Mammary epithelial cell (primary cell): ENCODE measurements at regions of chr13 and their contacts with region 1.

Region 1: GRCh38 chr13:103883164-103883563 is 816.9 kb upstream of the SLC10A2 start:
- DNase-seq: peak; percentile 89
- H3K4me3 ChIP-seq: no peak overlapping the region
- H3K27ac ChIP-seq: no peak overlapping the region
- H3K4me1 ChIP-seq: peaks cover 2% of the 10 kb centered on the region
- H3K27me3 ChIP-seq: no peaks in the 10 kb centered on the region
- CTCF ChIP-seq: peak; percentile 46 to 67

Region 2: DNA sequence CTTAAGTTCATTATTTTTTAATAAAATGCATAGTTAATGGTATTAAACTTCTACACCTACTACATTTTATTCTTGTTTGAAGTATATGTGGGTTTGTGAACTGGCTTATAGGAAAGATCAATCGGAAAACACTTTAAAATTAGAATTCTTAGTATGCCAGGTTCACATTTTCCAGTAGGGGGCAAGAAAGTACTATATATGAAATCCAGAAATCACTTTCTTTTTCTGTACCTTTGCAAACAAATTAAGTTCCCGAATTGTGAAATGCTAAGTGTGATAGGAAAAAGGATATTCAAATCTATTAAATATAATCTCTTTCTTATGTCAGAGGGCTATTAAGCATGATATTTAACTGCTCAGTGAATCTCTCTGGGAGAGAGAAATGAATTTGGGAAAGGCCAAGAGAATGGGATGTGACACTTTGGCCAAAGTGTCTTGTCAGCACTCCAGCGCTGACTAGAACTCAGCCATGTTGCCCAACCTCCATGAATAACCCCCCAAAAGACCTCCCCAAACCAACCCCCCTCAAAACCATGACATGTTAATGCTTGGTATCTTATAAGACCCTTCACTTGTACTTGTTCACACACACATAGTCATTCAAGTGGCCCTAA is 694.3 kb before region 1 on chr13:
- CTCF ChIA-PET with region 1: no interaction called
- dilution Hi-C with region 1: no loop called
- in situ Hi-C with region 1: no loop called
- intact Hi-C with region 1: loop called (anchors 5 kb)
- DNase-seq: peak; percentile 23
- H3K4me3 ChIP-seq: no peak overlapping the region
- H3K27ac ChIP-seq: no peak overlapping the region
- H3K4me1 ChIP-seq: no peaks in the 10 kb centered on the region
- H3K27me3 ChIP-seq: no peaks in the 10 kb centered on the region
- CTCF ChIP-seq: peak; percentile 58 to 68

Region 3: DNA sequence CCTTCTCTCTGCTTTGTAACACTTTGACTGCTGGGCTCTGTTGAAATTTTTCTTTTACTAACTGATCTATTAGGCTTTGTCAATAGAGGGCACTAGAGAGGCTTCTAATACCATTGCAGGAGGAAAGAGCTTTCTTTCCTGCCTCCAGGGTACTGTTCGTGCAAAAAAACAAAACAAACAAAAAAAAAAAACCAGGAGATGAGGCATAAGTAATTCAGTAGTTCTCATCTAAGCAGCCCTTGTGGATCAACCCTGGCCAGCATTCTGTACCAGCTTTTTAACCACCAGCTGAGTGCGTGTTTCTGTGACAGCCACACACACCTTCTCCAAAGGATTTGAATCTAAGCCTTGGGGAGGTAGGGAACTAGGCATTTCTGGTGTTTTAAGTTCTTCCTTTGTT is 890.6 kb after region 1 on chr13:
- CTCF ChIA-PET with region 1: no interaction called
- dilution Hi-C with region 1: no loop called
- in situ Hi-C with region 1: no loop called
- intact Hi-C with region 1: loop called (anchors 1 kb)
- DNase-seq: peak; percentile 32
- H3K4me3 ChIP-seq: no peak overlapping the region
- H3K27ac ChIP-seq: no peak overlapping the region
- H3K4me1 ChIP-seq: no peaks in the 10 kb centered on the region
- H3K27me3 ChIP-seq: no peaks in the 10 kb centered on the region
- CTCF ChIP-seq: peak; percentile 45 to 69

Region 4: DNA sequence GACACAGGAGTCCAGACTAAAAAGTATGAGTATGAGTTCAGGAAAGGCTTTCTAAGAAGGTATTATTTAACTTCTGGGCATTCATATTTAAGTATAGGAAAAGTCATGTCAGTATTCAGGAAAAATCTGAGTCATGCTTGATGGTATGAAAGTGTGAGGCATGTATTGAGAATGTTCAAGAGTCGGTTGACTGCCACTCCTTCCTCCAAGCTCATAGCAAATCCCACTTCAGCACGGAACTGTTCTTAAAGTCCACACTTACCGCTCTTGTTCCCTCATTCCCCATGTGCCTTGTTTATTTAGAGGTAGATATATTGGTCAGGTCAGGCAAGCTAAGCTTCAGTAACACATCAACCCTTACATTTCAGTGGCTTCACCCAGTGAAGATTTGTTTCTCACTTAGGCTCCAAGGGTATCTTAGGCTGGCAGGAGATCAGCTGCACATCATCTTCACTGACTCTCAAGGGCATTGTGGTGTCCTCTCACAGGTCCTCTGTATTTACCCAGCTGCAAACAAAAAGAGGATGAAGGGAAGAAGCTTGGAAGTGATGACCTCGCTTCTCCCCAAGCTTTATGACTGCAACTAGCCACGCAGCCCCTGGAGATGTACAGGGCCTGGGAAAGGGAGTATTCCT is 1463.1 kb after region 1 on chr13:
- CTCF ChIA-PET with region 1: no interaction called
- dilution Hi-C with region 1: no loop called
- in situ Hi-C with region 1: no loop called
- intact Hi-C with region 1: loop called (anchors 10 kb)
- DNase-seq: peak; percentile 69
- H3K4me3 ChIP-seq: no peak overlapping the region
- H3K27ac ChIP-seq: peak overlapping the region; percentile 50
- H3K4me1 ChIP-seq: no peaks in the 10 kb centered on the region
- H3K27me3 ChIP-seq: no peaks in the 10 kb centered on the region
- CTCF ChIP-seq: no peak